A549 (cell line): ENCODE measurements at regions of chr17 and their contacts with region 1.

Region 1: GRCh38 chr17:40615295-40615988 is 32.2 kb downstream of the SMARCE1 start:
- DNase-seq: peak; percentile 84 to 91
- ATAC-seq: peak; percentile 84 to 93
- H3K4me3 ChIP-seq: no peak overlapping the region
- H3K27ac ChIP-seq: peak overlapping the region in 1 of 2 experiments; percentile 45; a peak in 2 of 6 replicates
- H3K4me1 ChIP-seq: peaks cover 12% of the 10 kb centered on the region
- CTCF ChIP-seq: peak; percentile 93
- EP300 ChIP-seq: no peak
- POLR2A ChIP-seq: no peak
- RAD21 ChIP-seq: peak; percentile 94 to 96

Region 2: GRCh38 chr17:40582328-40582901 is 33.0 kb before region 1 on chr17:
- CTCF ChIA-PET with region 1: interaction called, 11 read pairs
- POLR2A ChIA-PET with region 1: no interaction called
- DNase-seq: no peak
- ATAC-seq: 0 out of 6 replicates have a peak, but pooled peaks have one; percentile 26 to 39
- H3K4me3 ChIP-seq: no peak overlapping the region
- H3K27ac ChIP-seq: no peak overlapping the region
- H3K4me1 ChIP-seq: no peaks in the 10 kb centered on the region
- CTCF ChIP-seq: no peak
- EP300 ChIP-seq: no peak
- POLR2A ChIP-seq: no peak
- RAD21 ChIP-seq: no peak

Region 3: DNA sequence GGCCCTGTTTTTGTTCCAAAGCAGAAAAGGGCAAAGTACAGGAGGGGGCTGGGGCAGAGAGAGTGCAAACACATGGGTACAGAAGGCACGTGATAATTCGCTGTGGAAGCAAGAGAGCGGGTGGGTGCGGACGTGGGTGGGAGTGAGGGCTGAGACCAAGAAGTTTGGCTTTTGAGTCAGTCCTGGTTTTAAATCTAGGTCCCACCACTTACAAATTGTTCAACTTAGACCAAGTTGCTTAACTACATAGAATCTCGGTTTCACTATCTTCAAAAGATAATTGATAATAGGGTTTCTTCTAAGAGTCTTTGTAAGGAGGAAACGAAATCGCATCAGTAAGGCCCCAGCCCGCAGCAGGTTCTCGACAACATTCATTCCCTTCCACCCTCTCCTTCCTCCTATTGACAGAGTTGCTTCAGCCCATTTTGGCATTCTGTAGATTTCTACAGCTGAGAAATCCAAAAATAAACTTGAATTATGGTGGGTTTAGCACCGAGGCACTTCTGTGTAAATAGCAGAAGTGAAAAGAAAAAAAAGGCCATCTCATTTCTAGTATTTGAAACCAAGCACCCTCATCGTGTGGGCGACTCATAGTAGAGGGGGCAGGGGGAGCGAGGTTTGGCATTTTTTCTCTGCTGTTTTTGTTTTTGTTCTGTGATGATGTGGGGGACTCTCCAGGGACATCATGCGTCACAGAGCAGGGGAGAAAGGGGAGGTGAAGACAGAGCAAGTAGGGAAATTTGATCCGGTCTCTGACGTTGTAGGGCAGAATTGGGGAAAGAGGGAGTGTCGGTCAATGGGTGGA is 16.6 kb before region 1 on chr17:
- CTCF ChIA-PET with region 1: interaction called, 22 read pairs
- POLR2A ChIA-PET with region 1: no interaction called
- DNase-seq: no peak
- ATAC-seq: no peak
- H3K4me3 ChIP-seq: no peak overlapping the region
- H3K27ac ChIP-seq: no peak overlapping the region
- H3K4me1 ChIP-seq: no peaks in the 10 kb centered on the region
- CTCF ChIP-seq: no peak
- EP300 ChIP-seq: no peak
- POLR2A ChIP-seq: no peak
- RAD21 ChIP-seq: no peak

Region 4: DNA sequence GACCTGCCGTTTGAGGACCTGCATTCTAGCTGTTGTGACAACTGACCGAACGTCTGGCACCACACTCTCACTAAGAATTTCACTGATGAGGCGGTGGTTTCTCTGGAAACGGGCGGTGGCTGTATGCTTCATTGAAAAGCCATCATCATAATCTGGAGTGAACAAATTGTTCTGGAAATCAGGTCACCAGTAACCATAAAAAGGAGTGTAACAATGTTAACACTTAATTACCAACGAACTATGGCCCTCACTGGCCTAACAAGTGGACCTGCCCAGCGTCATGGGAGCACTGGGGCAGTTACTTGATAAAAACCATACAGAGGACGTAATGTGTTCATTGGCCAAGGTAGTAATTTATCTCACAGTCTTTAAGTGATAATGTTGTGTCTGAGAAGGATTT is 16.8 kb after region 1 on chr17:
- CTCF ChIA-PET with region 1: interaction called, 189 read pairs
- POLR2A ChIA-PET with region 1: interaction called, 4 read pairs
- DNase-seq: no peak
- ATAC-seq: no peak
- H3K4me3 ChIP-seq: no peak overlapping the region
- H3K27ac ChIP-seq: no peak overlapping the region
- H3K4me1 ChIP-seq: no peaks in the 10 kb centered on the region
- CTCF ChIP-seq: no peak
- EP300 ChIP-seq: no peak
- POLR2A ChIP-seq: no peak
- RAD21 ChIP-seq: no peak

Region 5: DNA sequence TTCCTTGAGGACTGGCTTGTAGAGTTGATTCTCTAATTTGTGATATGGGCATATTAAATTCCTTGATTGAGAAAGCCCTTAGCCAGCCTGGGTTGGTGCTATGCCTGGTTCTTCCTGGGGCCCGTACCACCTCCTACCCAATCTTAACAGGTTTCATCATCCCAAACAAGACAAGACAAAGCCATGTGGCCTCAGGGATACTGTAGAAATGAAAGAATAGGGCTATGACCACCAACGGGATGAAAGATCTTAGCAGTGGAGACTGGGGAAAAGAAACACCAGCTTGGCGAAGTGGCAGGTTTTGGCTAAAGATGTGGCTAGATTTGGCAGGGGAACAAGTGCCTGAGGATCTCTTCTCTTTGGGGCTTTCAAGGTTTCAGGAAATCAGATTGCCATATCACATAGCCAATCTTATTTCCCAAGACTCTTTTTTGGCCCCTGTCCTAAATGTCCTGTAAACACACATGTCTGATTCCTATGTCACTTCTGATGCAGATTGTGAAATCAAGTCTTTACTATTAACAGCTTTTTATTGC is 81.2 kb after region 1 on chr17:
- CTCF ChIA-PET with region 1: interaction called, 11 read pairs
- POLR2A ChIA-PET with region 1: no interaction called
- DNase-seq: peak in 1 of 2 experiments; percentile 13
- ATAC-seq: no peak
- H3K4me3 ChIP-seq: no peak overlapping the region
- H3K27ac ChIP-seq: peak overlapping the region; percentile 40 to 53; a peak in 5 of 6 replicates
- H3K4me1 ChIP-seq: peaks cover 24% of the 10 kb centered on the region
- CTCF ChIP-seq: no peak
- EP300 ChIP-seq: no peak
- POLR2A ChIP-seq: no peak
- RAD21 ChIP-seq: no peak

Region 6: DNA sequence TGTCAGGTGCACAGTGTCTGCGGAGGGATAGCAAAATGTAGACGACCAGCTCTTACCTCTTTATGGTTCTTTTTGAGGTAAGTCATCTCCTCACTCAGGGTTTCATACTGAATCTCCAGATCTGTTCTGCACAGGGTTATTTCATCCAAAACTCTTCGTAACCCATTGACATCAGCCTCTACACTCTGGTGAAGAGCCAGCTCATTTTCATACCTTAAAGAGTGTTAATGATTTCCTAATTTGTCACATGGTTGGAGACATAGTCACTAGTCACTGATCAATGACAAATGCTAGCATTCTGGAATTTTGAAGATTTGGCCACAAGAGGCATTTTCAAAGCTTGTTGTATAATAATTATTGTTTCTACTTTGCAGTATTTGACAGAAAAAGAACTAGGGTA is 138.4 kb after region 1 on chr17:
- CTCF ChIA-PET with region 1: no interaction called
- POLR2A ChIA-PET with region 1: no interaction called
- DNase-seq: no peak
- ATAC-seq: no peak
- H3K4me3 ChIP-seq: no peak overlapping the region
- H3K27ac ChIP-seq: no peak overlapping the region
- H3K4me1 ChIP-seq: no peaks in the 10 kb centered on the region
- CTCF ChIP-seq: no peak
- EP300 ChIP-seq: no peak
- POLR2A ChIP-seq: no peak
- RAD21 ChIP-seq: no peak

Region 7: DNA sequence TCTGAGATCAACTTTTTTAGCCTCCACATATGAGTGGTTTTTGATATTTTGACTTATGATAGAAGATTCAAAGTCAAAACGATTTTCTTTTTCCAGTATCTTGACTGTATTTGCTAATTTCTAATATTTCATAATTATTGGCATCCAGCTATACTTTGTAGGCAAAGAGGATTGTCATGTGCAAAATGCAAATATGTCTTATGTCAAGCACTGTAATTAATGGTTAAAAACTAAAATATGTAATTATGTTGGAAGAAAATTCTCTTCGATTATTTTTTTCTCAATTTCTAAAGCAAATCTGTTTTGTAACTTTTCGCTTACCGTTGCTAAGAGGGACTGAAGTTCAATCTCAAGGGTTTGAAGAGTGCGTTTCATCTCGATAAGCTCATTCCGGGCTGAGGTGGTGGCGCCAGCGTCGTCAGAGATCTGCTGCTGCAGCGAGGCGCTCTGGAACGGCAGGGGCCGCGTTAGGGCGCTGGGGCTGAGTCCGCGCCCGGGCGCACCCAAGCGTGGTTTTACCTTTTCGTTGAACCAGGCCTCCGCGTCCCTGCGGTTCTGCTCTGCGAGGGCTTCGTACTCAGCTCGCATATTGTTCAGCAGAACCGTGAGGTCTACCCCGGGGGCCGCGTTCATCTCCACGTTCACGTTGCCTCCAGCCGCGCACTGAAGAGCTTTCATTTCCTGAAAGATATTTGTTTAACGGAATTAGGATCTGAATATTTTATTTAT is 163.9 kb after region 1 on chr17:
- CTCF ChIA-PET with region 1: interaction called, 13 read pairs
- POLR2A ChIA-PET with region 1: no interaction called
- DNase-seq: peak; percentile 45 to 53
- ATAC-seq: peak; percentile 93 to 94
- H3K4me3 ChIP-seq: peak overlapping the region; percentile 39
- H3K27ac ChIP-seq: peak overlapping the region in 1 of 2 experiments; percentile 62; a peak in 3 of 6 replicates
- H3K4me1 ChIP-seq: 0 out of 3 replicates have a peak, but pooled peaks cover 5% of the 10 kb centered on the region
- CTCF ChIP-seq: no peak
- EP300 ChIP-seq: no peak
- POLR2A ChIP-seq: no peak
- RAD21 ChIP-seq: no peak

Region 8: GRCh38 chr17:40791787-40792436 is 176.5 kb after region 1 on chr17:
- CTCF ChIA-PET with region 1: interaction called, 304 read pairs
- POLR2A ChIA-PET with region 1: no interaction called
- DNase-seq: peak; percentile 45 to 61
- ATAC-seq: peak; percentile 73 to 74
- H3K4me3 ChIP-seq: no peak overlapping the region
- H3K27ac ChIP-seq: no peak overlapping the region
- H3K4me1 ChIP-seq: no peaks in the 10 kb centered on the region
- CTCF ChIP-seq: peak; percentile 98
- EP300 ChIP-seq: no peak
- POLR2A ChIP-seq: no peak
- RAD21 ChIP-seq: peak; percentile 83 to 86